Heart left ventricle (tissue), 16 donors: ENCODE measurements at regions of chr2 and their contacts with region 1.

Region 1: DNA sequence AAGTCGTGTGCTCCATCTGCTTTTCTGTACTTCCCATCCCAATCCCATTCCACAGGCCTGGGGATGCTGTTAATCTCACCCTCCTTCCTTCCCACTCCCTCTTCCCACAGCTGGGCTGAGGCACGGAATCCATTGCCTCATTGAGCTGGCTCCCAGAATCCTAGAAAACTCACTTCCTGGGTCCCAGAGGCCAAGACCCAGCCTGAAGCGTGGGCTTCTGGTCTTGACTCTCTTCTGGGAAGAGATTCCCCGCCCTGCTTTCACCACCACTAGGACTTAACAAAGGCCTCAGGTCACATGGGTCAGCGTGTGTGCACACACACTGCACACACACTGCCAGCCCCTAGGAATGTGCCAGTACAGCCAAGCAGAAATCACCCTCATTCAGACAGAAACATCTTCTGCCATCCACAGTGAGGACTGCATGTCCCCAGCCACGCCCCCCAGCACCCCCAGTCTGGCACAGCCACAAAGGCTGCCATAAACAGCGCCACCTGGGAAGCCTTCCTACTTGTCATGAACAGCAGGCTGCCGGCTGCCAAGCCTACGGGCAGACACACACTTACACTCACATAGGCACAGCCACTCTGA is 165.8 kb downstream of the TNS1 start:
- DNase-seq: peak; percentile 83 to 93 (median 85)
- ATAC-seq: peak; percentile 59 to 64 (median 62)
- H3K4me3 ChIP-seq: no peak overlapping the region
- H3K27ac ChIP-seq: peak overlapping the region; percentile 74 to 96 (median 88)
- H3K4me1 ChIP-seq: peaks cover 22 to 100% (median 97%) of the 10 kb centered on the region in 12 donors
- H3K27me3 ChIP-seq: no peaks in the 10 kb centered on the region
- CTCF ChIP-seq: peak in 11 of 12 donors; percentile 7 to 55 (median 38)
- POLR2A ChIP-seq: no peak

Region 2: GRCh38 chr2:217789003-217789735 is 47.8 kb before region 1 on chr2:
- intact Hi-C with region 1: no loop called
- DNase-seq: peak; percentile 77 to 90 (median 83)
- ATAC-seq: peak; percentile 14 to 66 (median 46)
- H3K4me3 ChIP-seq: peak overlapping the region in 6 of 12 donors; percentile 9 to 47 (median 20)
- H3K27ac ChIP-seq: peak overlapping the region in 7 of 12 donors; percentile 15 to 76 (median 50)
- H3K4me1 ChIP-seq: peaks cover 0 to 50% (median 31%) of the 10 kb centered on the region in 12 donors
- H3K27me3 ChIP-seq: no peaks in the 10 kb centered on the region
- CTCF ChIP-seq: peak; percentile 97 to 100 (median 99)
- POLR2A ChIP-seq: no peak

Region 3: GRCh38 chr2:217851191-217852020 is 14.4 kb after region 1 on chr2:
- intact Hi-C with region 1: loop called in 4 of 10 experiments (anchors 2 kb)
- DNase-seq: peak in 3 of 5 donors; percentile 57 to 73 (median 60)
- ATAC-seq: peak; percentile 9 to 60 (median 32)
- H3K4me3 ChIP-seq: peak overlapping the region in 1 of 12 donors; percentile 24
- H3K27ac ChIP-seq: peak overlapping the region; percentile 52 to 98 (median 80)
- H3K4me1 ChIP-seq: peaks cover 24 to 100% (median 90%) of the 10 kb centered on the region in 12 donors
- H3K27me3 ChIP-seq: no peaks in the 10 kb centered on the region
- CTCF ChIP-seq: no peak
- POLR2A ChIP-seq: no peak

Region 4: GRCh38 chr2:217858519-217859491 is 21.8 kb after region 1 on chr2:
- intact Hi-C with region 1: loop called in 4 of 10 experiments (anchors 2 kb)
- DNase-seq: peak; percentile 88 to 94 (median 91)
- ATAC-seq: peak; percentile 82 to 84 (median 82)
- H3K4me3 ChIP-seq: peak overlapping the region in 11 of 12 donors; percentile 19 to 72 (median 55)
- H3K27ac ChIP-seq: peak overlapping the region; percentile 74 to 99 (median 90)
- H3K4me1 ChIP-seq: peaks cover 9 to 95% (median 74%) of the 10 kb centered on the region in 12 donors
- H3K27me3 ChIP-seq: no peaks in the 10 kb centered on the region
- CTCF ChIP-seq: no peak
- POLR2A ChIP-seq: peak in 1 of 2 donors; percentile 35

Region 5: DNA sequence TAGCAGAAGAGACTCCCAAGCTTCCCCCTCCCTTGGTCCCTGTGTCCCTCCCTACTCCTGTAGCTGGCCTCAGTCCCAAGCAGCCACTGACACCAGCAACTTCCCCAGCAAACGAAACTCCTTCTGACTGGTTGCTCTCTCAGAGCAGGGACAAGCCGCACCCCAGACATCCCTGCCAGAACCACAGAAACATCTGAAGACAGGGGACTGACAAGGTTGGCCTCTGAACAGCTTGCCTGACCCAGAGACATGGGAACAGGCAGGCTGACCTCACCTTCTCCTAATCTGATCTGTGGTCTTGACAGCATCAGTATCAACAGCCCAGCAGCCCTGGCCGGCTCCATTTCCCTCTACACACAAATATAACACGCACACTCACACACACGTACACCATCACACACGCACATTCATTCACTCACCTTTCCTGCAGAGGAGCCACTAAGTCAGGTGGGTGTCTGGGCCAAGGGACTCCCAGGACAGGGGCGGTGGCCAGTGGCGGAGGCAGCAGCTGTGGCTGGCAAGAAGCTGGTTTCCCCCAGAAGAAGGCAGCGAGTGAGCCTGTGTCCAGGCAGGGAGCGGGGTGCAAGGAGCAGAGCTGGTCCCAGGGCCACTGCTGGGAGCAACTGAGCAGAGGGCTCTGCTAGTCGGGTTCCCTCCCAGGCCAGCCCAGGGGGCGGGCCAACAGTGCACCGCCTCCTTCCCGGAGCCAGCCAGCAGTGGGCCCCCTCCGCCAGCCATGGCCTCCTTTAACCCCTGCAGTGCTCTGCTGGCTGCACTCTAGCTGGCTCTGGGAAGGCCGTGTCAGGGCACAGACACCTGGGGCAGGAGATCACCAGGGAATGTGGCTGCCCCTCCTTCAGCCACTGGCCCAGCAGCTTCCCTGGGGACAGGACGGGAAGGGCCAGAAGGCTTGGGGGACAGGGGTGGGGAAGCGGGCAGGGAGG is 106.7 kb after region 1 on chr2:
- intact Hi-C with region 1: no loop called
- DNase-seq: peak; percentile 91 to 94 (median 92)
- ATAC-seq: peak; percentile 87 to 90 (median 90)
- H3K4me3 ChIP-seq: peak overlapping the region; percentile 56 to 95 (median 82)
- H3K27ac ChIP-seq: peak overlapping the region; percentile 92 to 99 (median 96)
- H3K4me1 ChIP-seq: peaks cover 8 to 82% (median 65%) of the 10 kb centered on the region in 12 donors
- H3K27me3 ChIP-seq: no peaks in the 10 kb centered on the region
- CTCF ChIP-seq: peak; percentile 24 to 67 (median 52)
- POLR2A ChIP-seq: peak; percentile 64 to 96